Psoas muscle (tissue), 8 donors: ENCODE measurements at regions of chr11 and their contacts with region 1.

Region 1: GRCh38 chr11:64930321-64930720 is 5.4 kb downstream of the GPHA2 start:
- DNase-seq: no peak
- ATAC-seq: no peak
- H3K4me3 ChIP-seq: no peak overlapping the region
- H3K27ac ChIP-seq: no peak overlapping the region
- H3K4me1 ChIP-seq: peaks cover 8% of the 10 kb centered on the region
- H3K27me3 ChIP-seq: no peaks in the 10 kb centered on the region
- CTCF ChIP-seq: no peak

Region 2: DNA sequence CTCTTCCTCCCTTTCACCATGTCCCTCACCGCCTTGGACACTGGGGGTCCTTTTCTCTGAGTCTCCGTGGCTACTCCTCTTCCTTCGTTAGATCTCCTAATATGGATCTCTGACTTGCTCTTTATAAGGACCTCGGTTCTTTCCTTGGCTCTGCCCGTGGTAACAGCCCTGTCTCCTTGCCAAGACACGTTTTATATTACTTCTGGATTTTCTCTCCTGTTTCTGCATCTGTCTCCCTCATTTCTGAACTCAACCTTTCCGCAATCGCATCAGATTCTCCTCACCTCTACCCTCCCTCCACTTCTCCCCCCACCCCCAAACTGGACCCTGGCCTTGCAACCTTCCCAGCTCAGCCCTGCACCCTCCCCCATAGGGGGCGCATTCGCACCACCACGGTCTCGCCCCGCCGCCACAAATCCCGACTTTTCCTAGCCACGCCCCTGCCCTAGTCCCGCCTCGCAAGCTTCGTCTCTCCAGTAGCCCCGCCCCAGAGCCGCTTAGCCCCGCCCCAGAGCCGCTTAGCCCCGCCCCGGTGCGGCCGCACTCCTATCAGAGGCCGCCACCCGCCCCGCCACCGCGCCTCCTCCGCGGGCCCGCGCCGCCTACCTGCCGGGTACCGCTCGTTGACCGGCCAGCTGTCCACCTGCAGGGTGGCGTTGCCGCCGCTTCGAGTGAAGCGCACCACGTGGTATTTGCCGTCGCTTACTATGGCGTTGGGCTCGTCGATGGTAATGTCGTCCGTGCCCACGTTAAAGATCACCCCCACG is 300.3 kb before region 1 on chr11:
- intact Hi-C with region 1: no loop called
- DNase-seq: no peak
- ATAC-seq: peak in 3 of 4 donors; percentile 33 to 53 (median 42)
- H3K4me3 ChIP-seq: no peak overlapping the region
- H3K27ac ChIP-seq: no peak overlapping the region
- H3K4me1 ChIP-seq: no peaks in the 10 kb centered on the region
- H3K27me3 ChIP-seq: peaks cover 0 to 3% (median 0%) of the 10 kb centered on the region in 3 donors
- CTCF ChIP-seq: no peak

Region 3: DNA sequence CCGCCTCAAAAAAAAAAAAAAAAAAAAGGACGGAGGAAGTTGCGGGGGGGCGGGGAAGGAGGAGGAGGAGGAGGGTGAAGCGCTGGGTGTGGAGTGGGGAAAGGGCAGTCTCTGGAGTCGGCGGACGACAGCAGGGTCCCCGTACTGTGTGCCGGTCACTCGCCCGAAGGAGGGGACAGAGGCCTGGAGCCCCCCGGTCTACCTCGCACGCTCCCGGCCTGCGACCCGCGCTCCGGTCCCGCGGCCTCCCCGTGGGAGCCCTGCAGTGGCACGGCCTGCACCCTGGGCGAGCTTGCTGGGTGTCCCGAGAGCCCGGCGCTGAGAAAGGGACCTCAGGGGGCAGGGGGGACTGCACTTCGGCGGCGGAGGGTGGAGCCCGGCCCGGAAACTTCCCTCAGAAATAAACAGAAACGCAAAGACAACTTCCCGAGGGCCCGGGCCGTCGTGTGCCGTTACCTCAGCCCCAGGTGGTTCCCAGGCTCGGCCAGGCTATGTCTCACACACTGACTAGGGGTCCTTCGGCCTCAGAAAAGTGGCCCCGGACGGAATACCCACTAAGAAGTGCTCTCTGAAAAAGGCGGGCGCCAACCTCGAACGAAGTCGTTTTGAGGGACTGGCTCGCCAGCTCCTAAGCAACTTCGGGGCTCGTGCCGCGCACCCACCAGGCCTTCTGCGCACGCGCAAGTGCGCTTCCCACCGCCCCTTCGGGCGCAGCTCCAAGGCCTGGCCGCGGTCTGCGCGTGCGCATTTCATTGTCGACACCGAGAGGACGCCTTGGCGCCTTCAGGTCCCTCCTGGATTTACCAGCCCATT is 41.3 kb after region 1 on chr11 and contains the start of gene MAJIN:
- intact Hi-C with region 1: loop called in 1 of 2 experiments (anchors 1 kb)
- DNase-seq: peak; percentile 87 to 95
- ATAC-seq: peak; percentile 80 to 98 (median 90)
- H3K4me3 ChIP-seq: peak within 1 kb of the TSS; percentile 61
- H3K27ac ChIP-seq: no peak within 1 kb of the TSS
- H3K4me1 ChIP-seq: peaks cover 11% of the 10 kb centered on the region
- H3K27me3 ChIP-seq: no peaks in the 10 kb centered on the region
- CTCF ChIP-seq: no peak
- total RNA-seq, gene MAJIN: not detected